ENCODE measurements at regions of chr10 and their contacts with region 1.

Region 1: GRCh38 chr10:13787015-13787421 is 200.3 kb downstream of the PRPF18 start:
- DNase-seq: no peak
- ATAC-seq: no peak
- H3K4me3 ChIP-seq: no peak overlapping the region
- H3K27ac ChIP-seq: no peak overlapping the region
- H3K4me1 ChIP-seq: no peaks in the 10 kb centered on the region
- H3K27me3 ChIP-seq: no peaks in the 10 kb centered on the region
- CTCF ChIP-seq: no peak
- POLR2A ChIP-seq: no peak
- RAD21 ChIP-seq: no peak

Region 2: GRCh38 chr10:13457958-13458686 is 328.9 kb before region 1 on chr10:
- CTCF ChIA-PET with region 1: no interaction called
- POLR2A ChIA-PET with region 1: no interaction called
- RAD21 ChIA-PET with region 1: no interaction called
- intact Hi-C with region 1: no loop called
- DNase-seq: no peak
- ATAC-seq: no peak
- H3K4me3 ChIP-seq: no peak overlapping the region
- H3K27ac ChIP-seq: no peak overlapping the region
- H3K4me1 ChIP-seq: no peaks in the 10 kb centered on the region
- H3K27me3 ChIP-seq: no peaks in the 10 kb centered on the region
- CTCF ChIP-seq: no peak
- POLR2A ChIP-seq: no peak
- RAD21 ChIP-seq: no peak

Region 3: GRCh38 chr10:13528875-13529713 is 257.9 kb before region 1 on chr10 and contains the start of gene BEND7:
- CTCF ChIA-PET with region 1: no interaction called
- POLR2A ChIA-PET with region 1: no interaction called
- RAD21 ChIA-PET with region 1: no interaction called
- intact Hi-C with region 1: no loop called
- DNase-seq: no peak
- ATAC-seq: peak; percentile 81
- H3K4me3 ChIP-seq: peak within 1 kb of the TSS; percentile 50 to 64
- H3K27ac ChIP-seq: peak within 1 kb of the TSS; percentile 56; the same call in 1 of the 2 replicates
- H3K4me1 ChIP-seq: peaks cover 22 to 26% of the 10 kb centered on the region in 2 experiments
- H3K27me3 ChIP-seq: no peaks in the 10 kb centered on the region
- CTCF ChIP-seq: no peak
- POLR2A ChIP-seq: no peak
- RAD21 ChIP-seq: no peak
- total RNA-seq, gene BEND7: 13.8 TPM

Region 4: DNA sequence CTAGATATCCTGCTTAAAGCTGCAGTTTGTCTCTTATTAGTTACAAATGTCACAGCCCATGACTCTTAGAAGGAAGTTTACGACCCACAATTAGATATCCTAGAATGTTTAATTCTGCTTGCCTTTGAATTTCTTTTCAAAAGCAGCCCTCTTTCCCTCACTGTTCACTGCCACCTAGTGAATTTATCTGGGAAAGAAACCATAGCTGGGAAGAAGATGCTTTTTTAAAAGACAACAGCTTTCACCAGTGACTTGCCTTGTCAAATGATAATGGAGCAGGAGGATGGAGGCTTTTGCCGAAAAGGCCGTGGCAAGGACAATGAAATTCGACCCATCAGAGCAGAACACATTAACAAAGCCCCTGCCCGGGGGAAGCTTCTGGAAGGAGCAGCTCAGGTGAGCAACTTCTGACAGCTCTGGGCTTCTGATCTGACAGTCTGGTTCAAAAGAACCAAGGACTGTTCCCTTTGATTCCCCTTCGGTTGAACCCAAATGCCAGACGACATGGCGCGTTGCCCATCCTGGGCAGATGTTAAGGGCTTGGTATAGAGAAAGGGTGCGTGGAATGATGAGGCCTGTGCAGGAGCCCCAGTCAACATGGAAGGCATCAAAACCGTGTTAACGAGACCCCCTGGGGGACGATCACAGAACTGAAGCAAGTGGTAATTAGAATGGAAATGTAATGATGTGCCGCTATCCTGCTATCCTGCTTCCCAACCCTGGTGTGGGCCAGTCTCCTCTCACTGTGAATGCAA is 306.9 kb after region 1 on chr10:
- CTCF ChIA-PET with region 1: interaction called, 10 read pairs
- POLR2A ChIA-PET with region 1: no interaction called
- RAD21 ChIA-PET with region 1: no interaction called
- intact Hi-C with region 1: loop called (anchors 1 kb)
- DNase-seq: no peak
- ATAC-seq: no peak
- H3K4me3 ChIP-seq: no peak overlapping the region
- H3K27ac ChIP-seq: no peak overlapping the region
- H3K4me1 ChIP-seq: no peaks in the 10 kb centered on the region
- H3K27me3 ChIP-seq: 0 out of 2 replicates have a peak, but pooled peaks cover under 1% of the 10 kb centered on the region
- CTCF ChIP-seq: peak in 2 of 3 experiments; percentile 14 to 27; a peak in 2 of 6 replicates
- POLR2A ChIP-seq: no peak
- RAD21 ChIP-seq: peak; percentile 34; the same call in 1 of the 2 replicates

Region 5: GRCh38 chr10:14185316-14186045 is 398.5 kb after region 1 on chr10:
- CTCF ChIA-PET with region 1: no interaction called
- POLR2A ChIA-PET with region 1: no interaction called
- RAD21 ChIA-PET with region 1: no interaction called
- intact Hi-C with region 1: loop called (anchors 10 kb)
- DNase-seq: peak; percentile 40
- ATAC-seq: peak; percentile 78
- H3K4me3 ChIP-seq: no peak overlapping the region
- H3K27ac ChIP-seq: no peak overlapping the region
- H3K4me1 ChIP-seq: no peaks in the 10 kb centered on the region
- H3K27me3 ChIP-seq: peaks cover 43% of the 10 kb centered on the region
- CTCF ChIP-seq: no peak
- POLR2A ChIP-seq: peak; percentile 62
- RAD21 ChIP-seq: no peak